IMR-90 (cell line): ENCODE measurements at regions of chr5 and their contacts with region 1.

Region 1: DNA sequence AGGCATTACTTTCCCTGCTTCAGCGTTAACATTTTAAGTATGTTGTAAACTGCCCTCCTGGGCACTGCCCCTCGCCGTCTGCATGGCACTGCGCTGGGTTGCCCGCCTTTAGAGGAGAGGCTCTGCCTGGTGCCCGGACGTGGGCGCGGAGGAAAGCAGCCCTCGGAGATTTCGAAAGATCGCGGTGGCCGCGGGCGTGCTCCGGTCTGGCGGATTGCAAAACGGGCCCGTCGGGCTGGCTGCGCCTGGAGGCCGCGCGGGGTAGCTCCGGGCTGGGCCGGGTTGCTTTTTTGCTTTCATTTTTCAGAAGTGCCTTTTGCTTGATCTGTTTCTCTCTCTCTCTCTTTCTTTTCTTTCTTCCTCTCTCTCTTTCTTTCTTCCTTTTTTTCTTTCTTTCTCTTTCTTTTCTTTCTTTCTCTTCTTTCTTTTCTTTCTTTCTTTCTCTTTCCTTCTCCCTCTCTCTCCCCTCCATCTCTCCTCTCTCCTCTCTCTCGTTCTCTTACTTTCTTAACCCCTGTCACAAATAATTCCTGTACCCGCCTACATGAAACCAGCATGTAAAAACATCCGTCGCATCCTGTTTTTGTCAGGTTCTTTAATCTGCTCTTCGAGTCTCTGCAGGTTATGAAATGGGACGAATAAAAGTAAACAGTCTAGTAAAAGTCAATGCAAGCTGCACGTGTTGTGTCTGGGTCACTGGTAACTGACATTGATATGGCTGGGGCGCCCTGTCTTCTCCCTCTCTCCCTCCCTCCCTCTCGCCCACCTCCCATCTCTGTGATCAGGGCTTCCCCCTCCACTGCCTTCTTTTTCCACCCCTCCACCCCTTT is 1.7 kb downstream of the FST start:
- DNase-seq: peak; percentile 71
- ATAC-seq: peak; percentile 8
- H3K4me3 ChIP-seq: peak overlapping the region; percentile 100
- H3K27ac ChIP-seq: peak overlapping the region; percentile 99
- H3K4me1 ChIP-seq: peaks cover 15% of the 10 kb centered on the region
- H3K27me3 ChIP-seq: no peaks in the 10 kb centered on the region
- CTCF ChIP-seq: 0 out of 2 replicates have a peak, but pooled peaks have one; percentile 5
- POLR2A ChIP-seq: peak; percentile 69
- RAD21 ChIP-seq: peak; percentile 39; the same call in 1 of the 2 replicates

Region 2: GRCh38 chr5:53123702-53124101 is 358.4 kb before region 1 on chr5:
- CTCF ChIA-PET with region 1: no interaction called
- POLR2A ChIA-PET with region 1: no interaction called
- dilution Hi-C with region 1: no loop called
- in situ Hi-C with region 1: no loop called
- intact Hi-C with region 1: loop called (anchors 2 kb)
- DNase-seq: peak; percentile 40
- ATAC-seq: peak; percentile 36; the same call in 1 of the 2 replicates
- H3K4me3 ChIP-seq: no peak overlapping the region
- H3K27ac ChIP-seq: no peak overlapping the region
- H3K4me1 ChIP-seq: peaks cover 5% of the 10 kb centered on the region; the same call in 1 of the 2 replicates
- H3K27me3 ChIP-seq: no peaks in the 10 kb centered on the region; the same call in 1 of the 2 replicates
- CTCF ChIP-seq: peak; percentile 41
- POLR2A ChIP-seq: no peak
- RAD21 ChIP-seq: peak; percentile 46

Region 3: GRCh38 chr5:53335115-53335514 is 147.0 kb before region 1 on chr5:
- CTCF ChIA-PET with region 1: no interaction called
- POLR2A ChIA-PET with region 1: no interaction called
- dilution Hi-C with region 1: no loop called
- in situ Hi-C with region 1: no loop called
- intact Hi-C with region 1: loop called (anchors 5 kb)
- DNase-seq: peak; percentile 34
- ATAC-seq: no peak
- H3K4me3 ChIP-seq: no peak overlapping the region
- H3K27ac ChIP-seq: peak overlapping the region; percentile 92
- H3K4me1 ChIP-seq: peaks cover 21% of the 10 kb centered on the region
- H3K27me3 ChIP-seq: no peaks in the 10 kb centered on the region
- CTCF ChIP-seq: peak; percentile 28; the same call in 1 of the 2 replicates
- POLR2A ChIP-seq: no peak
- RAD21 ChIP-seq: peak; percentile 19; the same call in 1 of the 2 replicates

Region 4: DNA sequence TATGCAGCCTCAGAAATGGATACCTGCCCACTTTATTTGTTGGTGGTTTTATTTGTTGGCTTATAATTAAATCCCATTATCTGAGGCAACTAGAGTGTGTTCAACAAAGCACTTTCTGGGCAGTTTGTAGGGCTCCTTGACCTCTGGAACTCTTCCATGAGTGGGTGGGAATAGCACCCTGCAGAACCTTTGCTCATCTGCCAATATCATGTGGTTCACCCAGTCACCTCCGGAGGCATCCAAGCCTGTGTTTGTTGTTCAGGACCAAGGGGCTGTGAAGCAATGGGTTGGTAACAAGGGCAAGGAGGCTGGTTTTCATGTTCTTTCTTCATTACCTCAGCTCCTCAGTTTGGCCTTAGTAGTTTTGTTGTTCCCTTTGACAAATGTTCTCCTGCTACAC is 392.3 kb after region 1 on chr5:
- CTCF ChIA-PET with region 1: interaction called, 3 read pairs
- POLR2A ChIA-PET with region 1: no interaction called
- dilution Hi-C with region 1: no loop called
- in situ Hi-C with region 1: no loop called
- intact Hi-C with region 1: loop called (anchors 5 kb)
- DNase-seq: no peak
- ATAC-seq: no peak
- H3K4me3 ChIP-seq: no peak overlapping the region
- H3K27ac ChIP-seq: no peak overlapping the region
- H3K4me1 ChIP-seq: no peaks in the 10 kb centered on the region; the same call in 1 of the 2 replicates
- H3K27me3 ChIP-seq: no peaks in the 10 kb centered on the region
- CTCF ChIP-seq: no peak; the same call in 1 of the 2 replicates
- POLR2A ChIP-seq: no peak
- RAD21 ChIP-seq: peak; percentile 25; the same call in 1 of the 2 replicates

Region 5: GRCh38 chr5:54062958-54063357 is 580.9 kb after region 1 on chr5:
- CTCF ChIA-PET with region 1: no interaction called
- POLR2A ChIA-PET with region 1: no interaction called
- dilution Hi-C with region 1: no loop called
- in situ Hi-C with region 1: no loop called
- intact Hi-C with region 1: loop called (anchors 5 kb)
- DNase-seq: peak; percentile 78
- ATAC-seq: peak; percentile 54
- H3K4me3 ChIP-seq: no peak overlapping the region
- H3K27ac ChIP-seq: peak overlapping the region; percentile 78
- H3K4me1 ChIP-seq: peaks cover 9% of the 10 kb centered on the region
- H3K27me3 ChIP-seq: no peaks in the 10 kb centered on the region
- CTCF ChIP-seq: no peak
- POLR2A ChIP-seq: no peak
- RAD21 ChIP-seq: no peak

Region 6: DNA sequence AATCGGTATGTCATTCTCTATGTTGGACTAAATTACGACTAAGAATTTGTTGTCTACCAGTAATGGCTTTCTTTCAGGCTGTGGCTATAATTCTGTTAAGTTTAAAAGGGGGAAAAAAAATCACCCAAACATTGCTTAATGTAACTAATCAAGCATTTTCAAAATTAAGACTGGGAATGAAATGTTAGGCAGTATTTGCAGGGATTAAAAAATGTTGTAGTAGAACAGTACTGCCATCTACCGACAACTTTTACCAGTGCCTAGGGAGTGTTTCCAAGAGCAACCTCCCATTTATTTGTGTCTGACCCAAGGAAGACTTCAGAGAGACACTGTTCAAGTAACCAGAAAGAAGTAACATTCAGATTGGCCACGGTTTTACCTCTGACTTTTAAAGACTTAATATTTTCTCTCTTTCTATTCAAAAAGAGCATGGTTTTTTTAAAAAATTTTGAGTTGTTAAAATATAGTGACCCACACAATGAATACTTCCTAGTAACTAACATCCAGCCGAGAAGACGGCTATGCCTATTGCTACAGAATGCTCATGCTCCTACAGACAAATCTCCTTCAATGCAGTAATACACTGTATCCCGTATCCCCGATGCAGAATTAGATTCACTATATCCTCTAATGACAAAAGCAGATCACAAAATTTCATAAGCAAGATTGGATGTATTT is 735.9 kb after region 1 on chr5:
- CTCF ChIA-PET with region 1: no interaction called
- POLR2A ChIA-PET with region 1: interaction called, 3 read pairs
- dilution Hi-C with region 1: no loop called
- in situ Hi-C with region 1: no loop called
- intact Hi-C with region 1: loop called (anchors 1 kb)
- DNase-seq: peak; percentile 82
- ATAC-seq: peak; percentile 84
- H3K4me3 ChIP-seq: no peak overlapping the region
- H3K27ac ChIP-seq: no peak overlapping the region
- H3K4me1 ChIP-seq: peaks cover 4% of the 10 kb centered on the region; the same call in 1 of the 2 replicates
- H3K27me3 ChIP-seq: no peaks in the 10 kb centered on the region
- CTCF ChIP-seq: peak; percentile 89
- POLR2A ChIP-seq: no peak
- RAD21 ChIP-seq: peak; percentile 92